GM10248 (cell line): ENCODE measurements at regions of chr1 and their contacts with region 1.

Region 1: DNA sequence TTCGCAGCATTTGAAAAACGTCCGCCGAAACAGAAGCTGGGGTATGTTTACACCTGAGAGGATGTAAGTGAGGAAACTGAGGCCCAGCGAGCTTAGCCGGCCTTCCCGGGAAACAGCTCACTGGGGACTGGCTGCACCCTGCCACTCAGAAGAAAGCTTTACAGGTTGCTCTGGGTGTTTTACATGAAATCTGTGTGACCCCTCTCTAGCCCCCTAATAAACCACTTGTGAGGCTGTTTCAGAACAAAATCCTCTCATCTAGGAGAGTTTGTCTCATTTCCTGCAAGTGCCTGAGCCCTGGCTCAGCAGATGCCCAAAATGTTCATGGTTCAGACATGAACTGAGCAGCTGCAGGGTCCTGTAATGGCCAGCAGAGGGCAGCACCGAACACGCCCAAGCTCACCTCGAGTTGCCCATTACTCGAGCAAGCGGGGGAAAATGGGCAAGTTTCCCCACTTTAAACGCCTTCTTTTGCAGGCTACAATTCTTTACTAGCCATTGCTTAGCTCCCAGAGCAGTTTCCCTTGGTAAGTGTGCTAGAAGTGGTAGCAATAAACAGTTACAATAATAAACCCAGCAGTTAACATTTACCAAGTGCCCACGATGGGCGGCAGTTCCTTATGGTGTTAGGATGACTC is 76.4 kb downstream of the FHAD1 start:
- DNase-seq: peak; percentile 82
- CTCF ChIP-seq: peak; percentile 98

Region 2: DNA sequence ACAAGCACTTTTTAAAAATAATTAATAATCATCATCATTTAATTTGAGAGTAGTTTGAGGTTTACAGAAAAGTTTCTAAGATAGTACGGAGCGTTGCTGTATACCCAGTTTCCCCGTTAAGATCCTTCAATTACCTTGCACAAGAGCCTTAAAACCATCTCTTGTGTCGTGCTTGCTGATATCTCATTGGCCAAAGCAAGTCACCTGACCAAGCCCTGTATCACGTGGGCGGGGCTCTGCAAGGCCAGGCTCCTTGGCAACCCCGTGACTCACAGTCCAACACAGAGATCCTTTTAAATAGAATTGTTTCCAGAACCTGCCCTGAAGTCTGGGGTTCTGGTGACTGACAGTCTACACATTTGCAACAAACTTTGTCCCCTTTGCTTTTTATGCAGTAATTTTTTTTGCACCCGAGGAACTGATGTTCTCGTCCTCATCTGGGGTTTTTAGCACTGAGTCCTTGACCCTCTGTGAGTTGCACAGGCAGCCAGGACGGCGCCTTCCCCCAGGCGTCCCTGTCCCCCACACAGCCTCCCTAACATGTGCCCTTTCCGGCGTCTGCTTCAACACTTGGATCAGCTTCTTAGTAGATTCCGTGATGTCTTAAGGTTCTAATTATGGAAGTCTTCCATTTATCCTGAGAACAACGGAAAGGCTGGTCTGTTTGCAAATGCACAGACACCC is 353.2 kb before region 1 on chr1:
- CTCF ChIA-PET with region 1: no interaction called
- POLR2A ChIA-PET with region 1: no interaction called
- DNase-seq: no peak
- CTCF ChIP-seq: no peak

Region 3: GRCh38 chr1:15311880-15312279 is 11.6 kb before region 1 on chr1:
- CTCF ChIA-PET with region 1: interaction called, 23 read pairs
- POLR2A ChIA-PET with region 1: no interaction called
- DNase-seq: no peak
- CTCF ChIP-seq: no peak

Region 4: GRCh38 chr1:15337656-15338402 is 14.4 kb after region 1 on chr1:
- CTCF ChIA-PET with region 1: interaction called, 44 read pairs
- POLR2A ChIA-PET with region 1: no interaction called
- DNase-seq: no peak
- CTCF ChIP-seq: no peak

Region 5: GRCh38 chr1:15424146-15424667 is 100.7 kb after region 1 on chr1:
- CTCF ChIA-PET with region 1: interaction called, 151 read pairs
- POLR2A ChIA-PET with region 1: no interaction called
- DNase-seq: no peak
- CTCF ChIP-seq: no peak